ENCODE measurements at regions of chr13 and their contacts with region 1.

Region 1: DNA sequence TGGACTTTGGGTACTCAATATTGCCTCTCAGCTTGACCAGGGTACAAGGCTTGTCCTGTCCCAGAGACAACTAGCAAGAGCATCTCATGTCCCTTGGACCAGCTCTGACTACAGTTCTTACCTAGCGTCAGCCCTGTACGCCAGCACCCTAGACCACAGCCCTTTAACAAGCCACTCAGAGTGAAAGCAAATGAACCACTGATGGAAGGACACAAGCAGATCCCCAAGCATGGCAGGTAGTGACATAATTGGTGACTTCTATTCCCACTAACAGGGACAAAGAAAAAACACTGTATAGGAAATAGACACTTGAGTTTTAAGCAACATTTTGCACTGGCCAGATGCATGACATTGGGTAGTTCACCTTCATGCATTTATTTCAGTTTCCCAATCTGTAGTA is 8.8 kb upstream of the LRCH1 start:
- DNase-seq: no peak
- H3K4me3 ChIP-seq: no peak overlapping the region
- H3K27ac ChIP-seq: no peak overlapping the region
- H3K4me1 ChIP-seq: no peaks in the 10 kb centered on the region
- H3K27me3 ChIP-seq: no peaks in the 10 kb centered on the region
- CTCF ChIP-seq: no peak

Region 2: GRCh38 chr13:46753132-46753531 is 208.9 kb after region 1 on chr13:
- CTCF ChIA-PET with region 1: no interaction called
- POLR2A ChIA-PET with region 1: interaction called, 16 read pairs
- intact Hi-C with region 1: no loop called
- DNase-seq: no peak
- H3K4me3 ChIP-seq: no peak overlapping the region
- H3K27ac ChIP-seq: no peak overlapping the region
- H3K4me1 ChIP-seq: no peaks in the 10 kb centered on the region
- H3K27me3 ChIP-seq: no peaks in the 10 kb centered on the region
- CTCF ChIP-seq: no peak

Measured in PC-9 (cell line).